ENCODE measurements at regions of chr2 and their contacts with region 1.

Region 1: GRCh38 chr2:15560988-15561573 is at the start of gene NBAS:
- DNase-seq: peak; percentile 66
- H3K4me3 Mint-ChIP-seq: peak within 1 kb of the TSS; percentile 99
- H3K27ac Mint-ChIP-seq: peak within 1 kb of the TSS; percentile 92
- H3K4me1 Mint-ChIP-seq: peaks cover 33% of the 10 kb centered on the region
- H3K27me3 Mint-ChIP-seq: peaks cover 14% of the 10 kb centered on the region
- total RNA-seq, gene NBAS: 37.2 and 38.7 TPM in 2 replicates

Region 2: DNA sequence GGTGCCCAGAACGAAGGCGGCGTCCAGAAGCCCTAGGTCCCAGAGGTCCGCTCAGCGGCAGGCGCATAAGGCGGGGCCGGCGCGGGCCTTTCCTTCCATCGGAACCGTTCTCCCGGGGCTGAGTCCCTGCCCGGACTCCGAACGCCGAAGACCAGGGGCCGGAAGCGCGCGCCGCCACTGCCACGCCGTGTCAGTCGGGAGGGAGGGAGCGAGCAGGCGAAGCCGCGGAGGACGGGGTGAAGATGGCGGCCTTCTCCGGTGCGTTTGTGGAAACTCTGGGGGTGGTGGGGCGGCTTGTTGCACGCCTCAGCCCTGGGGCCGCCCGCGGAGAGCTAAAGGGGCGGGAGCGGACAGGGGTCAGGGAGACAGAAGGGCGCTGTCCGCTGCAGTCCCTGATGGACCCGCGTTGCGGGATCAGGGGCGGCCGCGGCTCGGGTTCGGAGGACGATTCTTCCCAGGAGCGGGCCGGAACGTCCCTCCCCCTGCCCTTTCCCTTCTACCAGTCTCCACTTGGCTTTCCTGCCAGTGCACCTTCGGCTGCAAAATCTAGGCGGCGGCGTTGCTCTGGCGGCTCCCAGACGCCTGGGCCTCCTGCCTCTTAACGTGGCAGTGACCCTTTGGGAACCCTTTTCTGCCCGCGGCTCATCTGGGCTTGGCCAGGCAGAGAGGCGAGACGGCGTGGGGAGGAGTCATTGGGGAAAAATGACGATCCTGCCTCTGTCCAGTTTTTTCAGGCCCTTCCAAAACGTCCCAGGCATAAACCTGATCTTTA is 30.8 kb after region 1 on chr2 and contains the start of gene DDX1:
- intact Hi-C with region 1: loop called (anchors 1 kb)
- DNase-seq: peak; percentile 82
- H3K4me3 Mint-ChIP-seq: peak within 1 kb of the TSS; percentile 90
- H3K27ac Mint-ChIP-seq: peak within 1 kb of the TSS; percentile 94
- H3K4me1 Mint-ChIP-seq: peaks cover 21% of the 10 kb centered on the region
- H3K27me3 Mint-ChIP-seq: no peaks in the 10 kb centered on the region
- total RNA-seq, gene DDX1: 100.0 and 111 TPM in 2 replicates

Region 3: DNA sequence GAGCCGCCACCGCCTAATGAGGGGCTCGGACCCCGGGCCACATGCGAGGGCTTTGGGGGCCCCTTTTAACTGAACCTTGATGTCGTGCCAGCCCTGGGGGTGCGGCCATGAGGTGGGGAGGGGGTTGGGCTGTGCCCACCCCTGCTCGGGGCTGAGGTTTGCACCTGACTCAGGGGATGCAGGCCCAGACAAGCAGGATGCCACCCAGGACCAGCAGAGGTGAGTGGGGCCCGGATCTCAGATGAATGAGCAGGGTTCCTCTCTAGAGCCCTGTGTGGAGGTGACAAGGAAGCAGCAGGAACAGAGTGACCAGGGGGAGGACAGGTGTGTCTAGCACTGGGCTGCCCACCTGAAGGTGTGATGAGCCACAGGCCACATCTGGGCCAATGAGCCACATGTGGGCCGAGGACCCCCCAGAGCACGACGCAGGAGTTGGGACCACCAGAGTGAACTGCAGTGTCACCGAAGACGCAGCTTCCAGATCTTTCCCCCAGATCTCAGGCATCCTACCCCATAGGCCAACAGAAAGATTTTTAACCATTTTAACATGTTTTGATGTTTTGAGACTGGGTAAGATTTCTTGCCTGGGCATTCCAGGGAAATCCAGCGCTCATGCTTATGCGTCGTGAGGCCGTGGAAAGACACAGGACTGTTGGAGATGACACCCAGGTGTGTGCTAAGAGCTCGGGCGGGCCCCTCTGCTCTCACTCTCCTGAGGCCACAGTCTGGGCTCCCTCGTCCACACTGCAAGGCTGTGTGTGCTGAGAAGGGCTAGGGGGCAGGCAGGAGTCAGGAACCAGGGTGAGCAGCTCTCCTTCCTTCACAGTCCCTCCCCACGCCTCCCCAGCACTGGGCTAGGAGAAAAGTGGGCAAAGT is 104.2 kb after region 1 on chr2:
- intact Hi-C with region 1: no loop called
- DNase-seq: no peak
- H3K4me3 Mint-ChIP-seq: no peak overlapping the region
- H3K27ac Mint-ChIP-seq: no peak overlapping the region
- H3K4me1 Mint-ChIP-seq: no peaks in the 10 kb centered on the region
- H3K27me3 Mint-ChIP-seq: peaks cover 2% of the 10 kb centered on the region